PC-3 (cell line): ENCODE measurements at regions of chr1 and their contacts with region 1.

Region 1: GRCh38 chr1:17880429-17880828 is 125.3 kb downstream of the ACTL8 start:
- DNase-seq: no peak
- ATAC-seq: no peak
- H3K4me3 ChIP-seq: no peak overlapping the region
- H3K27ac ChIP-seq: no peak overlapping the region
- H3K4me1 ChIP-seq: peaks cover 7% of the 10 kb centered on the region; the same call in 1 of the 2 replicates
- H3K27me3 ChIP-seq: peaks cover 6% of the 10 kb centered on the region; the same call in 1 of the 2 replicates
- CTCF ChIP-seq: no peak

Region 2: GRCh38 chr1:17768651-17769241 is 111.7 kb before region 1 on chr1:
- CTCF ChIA-PET with region 1: no interaction called
- POLR2A ChIA-PET with region 1: no interaction called
- intact Hi-C with region 1: no loop called
- DNase-seq: peak; percentile 64
- ATAC-seq: peak; percentile 53
- H3K4me3 ChIP-seq: no peak overlapping the region
- H3K27ac ChIP-seq: peak overlapping the region; percentile 84
- H3K4me1 ChIP-seq: peaks cover 35% of the 10 kb centered on the region
- H3K27me3 ChIP-seq: no peaks in the 10 kb centered on the region
- CTCF ChIP-seq: no peak

Region 3: GRCh38 chr1:17780916-17781315 is 99.5 kb before region 1 on chr1:
- CTCF ChIA-PET with region 1: no interaction called
- POLR2A ChIA-PET with region 1: no interaction called
- intact Hi-C with region 1: no loop called
- DNase-seq: no peak
- ATAC-seq: no peak
- H3K4me3 ChIP-seq: no peak overlapping the region
- H3K27ac ChIP-seq: no peak overlapping the region
- H3K4me1 ChIP-seq: no peaks in the 10 kb centered on the region
- H3K27me3 ChIP-seq: peaks cover 82% of the 10 kb centered on the region
- CTCF ChIP-seq: no peak

Region 4: DNA sequence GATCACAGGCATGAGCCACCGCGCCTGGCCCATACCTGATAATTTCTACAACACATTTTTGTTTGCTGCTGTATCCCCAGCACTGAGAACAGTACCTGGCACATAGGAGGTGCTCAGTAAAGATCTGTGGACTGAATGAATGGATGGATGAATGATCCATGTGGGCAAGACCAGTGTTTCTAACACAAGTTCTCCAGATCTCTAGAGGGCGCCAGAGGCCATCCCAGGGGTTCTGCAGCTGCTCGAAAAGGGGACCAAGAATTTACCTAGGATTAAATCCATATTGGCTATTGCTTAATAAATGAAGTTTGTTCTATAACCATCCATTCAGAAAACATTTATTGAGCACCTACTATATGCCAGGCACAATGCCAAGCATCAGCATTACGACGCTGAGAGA is 42.4 kb after region 1 on chr1:
- CTCF ChIA-PET with region 1: no interaction called
- POLR2A ChIA-PET with region 1: no interaction called
- intact Hi-C with region 1: no loop called
- DNase-seq: peak; percentile 45
- ATAC-seq: no peak
- H3K4me3 ChIP-seq: no peak overlapping the region
- H3K27ac ChIP-seq: no peak overlapping the region
- H3K4me1 ChIP-seq: no peaks in the 10 kb centered on the region
- H3K27me3 ChIP-seq: peaks cover 23% of the 10 kb centered on the region
- CTCF ChIP-seq: peak; percentile 67

Region 5: GRCh38 chr1:18574754-18575153 is 694.3 kb after region 1 on chr1:
- CTCF ChIA-PET with region 1: no interaction called
- POLR2A ChIA-PET with region 1: interaction called, 24 read pairs
- intact Hi-C with region 1: no loop called
- DNase-seq: no peak
- ATAC-seq: no peak
- H3K4me3 ChIP-seq: no peak overlapping the region
- H3K27ac ChIP-seq: no peak overlapping the region
- H3K4me1 ChIP-seq: no peaks in the 10 kb centered on the region
- H3K27me3 ChIP-seq: peaks cover 3% of the 10 kb centered on the region; the same call in 1 of the 2 replicates
- CTCF ChIP-seq: no peak